ENCODE measurements at regions of chr22 and their contacts with region 1.

Region 1: GRCh38 chr22:48574776-48575565 is 1252.7 kb downstream of the BRD1 start:
- DNase-seq: peak; percentile 67
- ATAC-seq: peak; percentile 85
- H3K4me3 Mint-ChIP-seq: no peak overlapping the region
- H3K27ac Mint-ChIP-seq: no peak overlapping the region
- H3K4me1 Mint-ChIP-seq: no peaks in the 10 kb centered on the region
- H3K27me3 Mint-ChIP-seq: peaks cover 29% of the 10 kb centered on the region

Region 2: DNA sequence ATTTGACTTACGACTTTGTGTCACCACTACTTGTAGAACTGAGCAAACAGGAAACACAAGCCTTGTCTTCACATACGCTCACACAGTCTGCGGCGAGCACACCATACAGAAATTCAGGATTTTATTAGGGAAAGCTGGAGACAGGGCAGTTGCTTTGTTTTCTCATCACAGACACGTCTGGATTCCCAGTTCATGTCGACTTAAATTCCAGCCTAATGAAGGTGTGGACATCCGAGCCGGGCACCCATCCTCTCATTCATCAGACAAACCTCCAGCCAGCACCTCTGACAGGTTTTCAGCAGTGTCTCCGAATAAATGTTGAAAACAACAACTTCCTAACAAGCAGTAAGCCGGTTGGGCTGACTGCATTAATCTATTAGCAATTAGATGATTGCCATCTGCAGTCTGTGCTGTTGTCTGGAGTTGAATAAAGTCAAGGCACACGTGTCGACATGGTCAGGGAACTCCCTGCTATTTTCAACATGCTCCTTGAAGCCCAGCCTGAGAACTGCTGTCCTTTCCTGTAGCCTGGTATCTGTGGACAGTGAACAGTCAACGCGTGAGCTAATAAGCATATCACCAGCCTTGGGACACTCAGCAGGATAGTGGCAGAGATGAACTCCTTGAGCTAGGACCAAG is 158.3 kb before region 1 on chr22:
- CTCF ChIA-PET with region 1: no interaction called
- POLR2A ChIA-PET with region 1: no interaction called
- intact Hi-C with region 1: no loop called
- DNase-seq: no peak
- ATAC-seq: no peak
- H3K4me3 Mint-ChIP-seq: no peak overlapping the region
- H3K27ac Mint-ChIP-seq: no peak overlapping the region
- H3K4me1 Mint-ChIP-seq: no peaks in the 10 kb centered on the region
- H3K27me3 Mint-ChIP-seq: peaks cover 7% of the 10 kb centered on the region

Region 3: DNA sequence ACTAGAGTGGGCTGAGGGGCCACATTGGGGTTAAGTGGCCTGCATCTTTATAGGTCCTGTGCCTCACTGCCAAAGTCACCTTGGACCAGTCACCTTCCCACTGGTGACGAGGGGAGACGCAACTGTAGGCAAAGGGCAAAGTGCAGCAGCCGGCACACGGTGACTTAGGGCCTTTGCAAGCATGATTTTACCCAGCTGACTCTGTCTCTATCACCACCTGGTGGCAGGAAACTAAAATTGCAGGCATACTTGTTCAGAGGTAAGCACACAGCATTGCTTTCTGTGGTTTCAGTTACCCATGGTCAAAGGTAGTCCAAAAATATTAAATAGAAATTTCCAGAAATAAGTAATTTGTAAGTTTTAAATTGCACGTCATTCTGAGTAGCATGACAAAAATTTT is 88.3 kb after region 1 on chr22:
- CTCF ChIA-PET with region 1: no interaction called
- POLR2A ChIA-PET with region 1: no interaction called
- intact Hi-C with region 1: loop called (anchors 1 to 5 kb)
- DNase-seq: peak; percentile 28
- ATAC-seq: no peak
- H3K4me3 Mint-ChIP-seq: no peak overlapping the region
- H3K27ac Mint-ChIP-seq: no peak overlapping the region
- H3K4me1 Mint-ChIP-seq: no peaks in the 10 kb centered on the region
- H3K27me3 Mint-ChIP-seq: no peaks in the 10 kb centered on the region

Measured in activated CD4-positive, alpha-beta T cell treated with anti-CD3 and anti-CD28 coated beads for 36 hours (primary cell).